ENCODE measurements at regions of chr2 and their contacts with region 1.

Region 1: DNA sequence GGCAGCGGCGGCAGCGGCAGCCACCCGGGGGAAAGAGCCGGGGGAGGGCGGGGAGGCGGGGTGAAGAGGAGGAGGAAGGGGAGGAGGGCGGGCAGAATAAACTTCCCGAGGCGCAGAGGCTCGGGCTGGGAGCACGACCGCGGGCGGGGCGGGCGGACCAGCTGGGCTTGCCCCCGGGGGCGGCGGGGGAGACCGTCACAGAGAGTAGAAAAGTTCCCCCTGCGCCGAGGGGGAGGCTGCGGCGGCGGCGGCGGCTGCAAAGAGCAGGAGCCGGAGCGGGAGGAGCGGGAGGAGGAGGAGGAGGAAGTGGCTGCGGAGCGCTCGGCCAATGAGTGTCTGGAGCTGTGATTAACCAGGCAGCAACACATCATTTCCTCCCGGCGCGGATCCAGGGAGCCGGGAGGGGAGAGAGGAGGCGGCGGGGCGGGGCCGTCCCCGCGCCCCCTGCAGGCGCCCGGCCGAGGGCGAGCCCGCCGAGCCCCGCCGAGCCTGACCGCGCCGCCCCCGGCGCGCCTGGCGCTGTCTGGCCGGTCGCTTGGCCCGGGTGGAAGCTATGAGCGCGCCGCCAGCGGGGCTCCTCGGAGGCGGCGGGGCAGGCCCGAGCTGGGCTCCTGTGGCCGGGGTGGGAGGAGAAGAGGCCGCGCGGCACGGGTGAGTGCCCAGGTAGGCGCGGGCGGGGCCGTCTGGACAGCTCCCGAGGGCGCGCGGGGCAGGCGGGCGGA is at the start of gene ACVR1:
- DNase-seq: peak; percentile 55 to 94 (median 74)
- ATAC-seq: peak; percentile 74
- H3K4me3 ChIP-seq: peak within 1 kb of the TSS; percentile 66
- H3K4me3 Mint-ChIP-seq: peak within 1 kb of the TSS; percentile 99
- H3K27ac ChIP-seq: peak within 1 kb of the TSS; percentile 49 to 70
- H3K27ac Mint-ChIP-seq: peak within 1 kb of the TSS; percentile 85
- H3K4me1 ChIP-seq: peaks cover 35% of the 10 kb centered on the region
- H3K4me1 Mint-ChIP-seq: peaks cover 66% of the 10 kb centered on the region
- H3K27me3 ChIP-seq: no peaks in the 10 kb centered on the region
- H3K27me3 Mint-ChIP-seq: no peaks in the 10 kb centered on the region
- CTCF ChIP-seq: no peak
- total RNA-seq, gene ACVR1: 14.3 to 16.7 TPM

Region 2: DNA sequence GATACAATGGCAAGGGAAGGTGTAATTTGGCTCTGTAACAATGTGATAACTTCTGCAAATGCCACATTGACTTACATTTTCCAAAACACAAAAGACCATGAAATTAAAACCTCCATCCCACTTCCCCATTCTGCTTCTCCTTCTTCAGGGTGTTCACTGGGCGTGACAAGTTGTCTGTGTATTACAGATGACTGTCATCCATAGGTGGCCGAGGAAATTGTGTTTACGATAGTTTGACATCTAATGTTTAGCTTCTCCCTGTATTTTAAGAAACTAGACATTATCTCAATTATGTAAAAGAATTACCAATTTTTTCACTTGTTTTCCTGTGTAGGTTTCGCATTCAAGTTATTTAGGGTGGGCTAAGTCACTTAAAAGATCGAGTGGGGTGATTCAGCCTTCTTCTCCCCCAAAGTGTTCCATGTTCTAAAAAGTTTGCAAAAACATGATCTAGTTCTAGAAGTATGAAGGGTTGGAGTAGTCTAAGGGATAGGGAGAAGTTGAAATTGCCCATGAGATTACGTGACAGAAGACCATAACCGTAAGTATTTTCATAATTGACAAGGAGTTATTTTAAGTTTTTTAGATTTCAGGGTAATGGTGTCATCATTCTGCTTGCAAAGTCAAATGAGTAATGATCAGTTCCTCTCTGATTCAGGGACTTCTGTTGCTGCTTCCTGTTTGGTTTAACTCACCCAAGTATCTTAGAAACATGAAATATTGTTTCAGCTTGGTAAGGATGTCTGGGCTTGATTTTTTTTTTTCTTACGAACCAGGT is 407.1 kb before region 1 on chr2:
- CTCF ChIA-PET with region 1: no interaction called
- POLR2A ChIA-PET with region 1: no interaction called
- intact Hi-C with region 1: loop called in 1 of 2 experiments (anchors 5 kb)
- DNase-seq: peak in 3 of 14 experiments; percentile 81 to 86 (median 84)
- ATAC-seq: peak; percentile 89
- H3K4me3 ChIP-seq: peak overlapping the region; percentile 11
- H3K4me3 Mint-ChIP-seq: peak overlapping the region; percentile 74
- H3K27ac ChIP-seq: peak overlapping the region; percentile 80 to 88
- H3K27ac Mint-ChIP-seq: peak overlapping the region; percentile 98
- H3K4me1 ChIP-seq: peaks cover 31% of the 10 kb centered on the region
- H3K4me1 Mint-ChIP-seq: peaks cover 64% of the 10 kb centered on the region
- H3K27me3 ChIP-seq: no peaks in the 10 kb centered on the region
- H3K27me3 Mint-ChIP-seq: no peaks in the 10 kb centered on the region
- CTCF ChIP-seq: no peak

Region 3: DNA sequence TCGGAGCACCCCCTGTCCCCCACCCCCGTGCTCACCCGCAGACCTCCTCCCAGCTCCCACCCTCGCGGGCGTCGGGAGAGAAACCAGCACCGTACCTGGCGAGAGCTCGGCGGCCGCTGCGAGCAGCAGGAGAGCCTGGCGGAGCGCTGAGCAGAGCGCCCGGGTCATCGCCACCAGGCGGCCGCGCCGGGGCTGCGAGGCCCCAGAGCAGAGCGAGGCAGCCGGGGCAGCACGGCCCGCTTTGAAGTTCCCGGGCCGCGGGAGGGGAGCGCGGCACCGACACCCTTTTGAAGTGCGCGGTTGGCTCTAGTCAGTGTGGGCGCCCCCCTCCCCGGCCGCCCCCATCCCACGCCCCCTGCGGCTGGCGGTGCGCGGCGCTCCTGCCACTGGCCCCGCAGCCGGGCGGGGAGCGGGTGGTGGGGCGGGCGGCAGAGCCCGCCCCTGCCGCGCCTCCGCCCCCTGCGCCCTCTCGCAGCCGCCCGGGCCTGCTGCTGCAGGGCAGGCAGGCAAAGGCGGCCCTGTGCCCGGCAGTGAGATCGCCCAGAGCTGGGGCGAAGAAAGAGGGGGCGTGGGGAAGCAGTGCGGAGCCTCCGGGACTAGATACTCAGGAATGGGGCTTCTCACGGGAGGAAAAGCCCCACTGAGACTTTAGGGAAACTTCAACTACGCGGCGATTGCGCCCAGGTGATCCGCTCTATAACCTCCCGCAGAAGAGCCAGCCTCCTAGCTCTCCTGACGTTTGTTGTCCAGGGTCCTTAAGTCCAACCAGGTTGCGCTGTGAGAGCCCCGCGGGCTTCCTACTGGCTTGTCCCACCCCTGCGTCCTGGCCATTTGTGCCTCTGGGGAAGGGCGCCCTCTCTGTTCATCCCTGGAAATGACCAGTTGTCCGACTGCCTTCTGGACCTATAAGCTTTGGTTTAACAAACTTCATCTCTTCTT is 247.5 kb before region 1 on chr2 and contains the start of gene ACVR1C:
- CTCF ChIA-PET with region 1: interaction called, 3 read pairs
- POLR2A ChIA-PET with region 1: interaction called, 6 read pairs
- intact Hi-C with region 1: loop called in 1 of 2 experiments (anchors 5 kb)
- DNase-seq: peak; percentile 42 to 92 (median 61)
- ATAC-seq: peak; percentile 77
- H3K4me3 ChIP-seq: peak within 1 kb of the TSS; percentile 81
- H3K4me3 Mint-ChIP-seq: peak within 1 kb of the TSS; percentile 97
- H3K27ac ChIP-seq: peak within 1 kb of the TSS in 1 of 2 donors; percentile 74
- H3K27ac Mint-ChIP-seq: peak within 1 kb of the TSS; percentile 86
- H3K4me1 ChIP-seq: peaks cover 22% of the 10 kb centered on the region
- H3K4me1 Mint-ChIP-seq: peaks cover 40% of the 10 kb centered on the region
- H3K27me3 ChIP-seq: no peaks in the 10 kb centered on the region
- H3K27me3 Mint-ChIP-seq: no peaks in the 10 kb centered on the region
- CTCF ChIP-seq: peak; percentile 43
- total RNA-seq, gene ACVR1C: 5.2 to 6.2 TPM

Region 4: DNA sequence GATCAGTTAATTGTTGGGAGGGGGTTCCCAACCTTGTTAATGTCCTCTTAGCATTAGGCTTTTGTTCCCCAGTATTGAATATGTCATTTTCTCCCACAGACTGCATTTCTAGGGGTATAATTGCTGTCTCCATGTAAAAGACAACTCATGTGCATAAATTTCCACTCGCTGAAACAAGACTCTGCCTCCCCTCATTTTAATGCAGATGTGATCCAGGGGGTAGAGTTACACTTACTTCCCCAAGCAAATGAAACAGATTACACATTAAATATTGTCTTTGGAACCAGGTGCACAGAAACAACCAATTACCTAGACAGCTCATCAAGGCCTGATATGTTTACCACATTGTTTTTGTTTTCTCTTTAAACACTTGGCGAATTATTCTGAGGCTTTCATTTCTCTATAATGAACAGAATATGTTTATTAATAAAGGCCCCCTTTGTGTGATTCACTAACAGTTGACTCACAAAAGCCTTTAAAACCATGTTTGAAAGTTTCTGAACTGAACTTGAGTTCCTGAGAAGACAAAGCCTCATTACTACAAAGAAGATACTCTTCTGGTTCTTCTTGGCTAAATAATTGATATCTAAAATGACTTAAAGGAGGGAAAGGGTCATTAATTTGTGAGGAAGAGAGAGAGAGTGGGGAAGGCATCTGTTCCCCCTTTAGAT is 14.9 kb after region 1 on chr2:
- CTCF ChIA-PET with region 1: interaction called, 16 read pairs
- POLR2A ChIA-PET with region 1: interaction called, 83 read pairs
- intact Hi-C with region 1: loop called in 1 of 2 experiments (anchors 2 kb)
- DNase-seq: no peak
- ATAC-seq: no peak
- H3K4me3 ChIP-seq: no peak overlapping the region
- H3K4me3 Mint-ChIP-seq: peak overlapping the region; percentile 45
- H3K27ac ChIP-seq: peak overlapping the region in 1 of 2 donors; percentile 8
- H3K27ac Mint-ChIP-seq: peak overlapping the region; percentile 73
- H3K4me1 ChIP-seq: peaks cover 28% of the 10 kb centered on the region
- H3K4me1 Mint-ChIP-seq: peaks cover 64% of the 10 kb centered on the region
- H3K27me3 ChIP-seq: no peaks in the 10 kb centered on the region
- H3K27me3 Mint-ChIP-seq: no peaks in the 10 kb centered on the region
- CTCF ChIP-seq: no peak

Region 5: DNA sequence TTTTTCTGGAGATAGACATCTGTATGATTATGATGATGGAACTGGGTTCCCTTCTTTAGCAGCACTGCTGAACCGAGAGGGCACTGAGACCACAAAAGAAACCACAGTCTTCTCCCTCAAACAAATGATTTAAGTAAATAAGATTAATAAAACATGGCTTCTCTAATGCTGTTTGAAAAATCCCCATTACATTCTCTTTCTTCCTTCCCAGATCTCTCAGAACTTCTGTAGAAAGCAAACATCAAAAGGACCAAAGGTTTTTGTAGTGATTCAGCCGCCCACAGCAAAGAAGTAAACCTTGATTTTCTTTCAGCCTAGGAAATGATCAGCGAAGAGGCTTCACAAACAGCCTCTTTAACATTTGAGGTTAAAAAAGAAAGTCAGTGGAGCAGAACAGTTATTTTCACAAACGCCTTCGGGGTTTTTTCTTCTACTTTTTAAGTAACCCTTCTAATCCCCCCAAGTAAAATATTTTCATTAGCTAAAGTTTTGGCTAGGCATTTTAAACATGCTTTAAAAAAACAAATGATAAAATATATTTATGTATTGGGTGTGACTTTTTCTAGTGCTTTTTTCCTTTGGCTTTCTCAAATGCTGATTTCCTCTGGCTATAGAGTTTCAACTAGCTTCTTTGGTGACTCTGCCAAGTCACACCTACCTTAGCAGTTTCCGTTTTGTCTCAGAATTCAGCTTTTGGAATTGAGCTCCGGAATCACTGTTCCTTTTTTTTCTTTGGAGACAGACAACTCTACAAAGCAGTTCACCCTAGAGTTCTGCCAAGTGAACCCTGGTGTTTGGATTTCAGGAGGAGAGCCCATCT is 315.1 kb after region 1 on chr2:
- CTCF ChIA-PET with region 1: no interaction called
- POLR2A ChIA-PET with region 1: no interaction called
- intact Hi-C with region 1: no loop called
- DNase-seq: peak in 7 of 14 experiments; percentile 0 to 66 (median 29)
- ATAC-seq: peak; percentile 71
- H3K4me3 ChIP-seq: no peak overlapping the region
- H3K4me3 Mint-ChIP-seq: peak overlapping the region; percentile 45
- H3K27ac ChIP-seq: no peak overlapping the region
- H3K27ac Mint-ChIP-seq: peak overlapping the region; percentile 9
- H3K4me1 ChIP-seq: peaks cover 3% of the 10 kb centered on the region
- H3K4me1 Mint-ChIP-seq: peaks cover 36% of the 10 kb centered on the region
- H3K27me3 ChIP-seq: no peaks in the 10 kb centered on the region
- H3K27me3 Mint-ChIP-seq: peaks cover 19% of the 10 kb centered on the region
- CTCF ChIP-seq: no peak

Measured in CD4-positive, alpha-beta T cell (primary cell).